Transverse colon (tissue), 4 donors: ENCODE measurements at regions of chr22 and their contacts with region 1.

Region 1: GRCh38 chr22:25536589-25536988 is 27.9 kb upstream of the GRK3 start:
- DNase-seq: no peak
- H3K4me3 ChIP-seq: no peak overlapping the region
- H3K27ac ChIP-seq: peak overlapping the region in 2 of 4 donors; percentile 3 to 30
- H3K4me1 ChIP-seq: peaks cover 0 to 4% (median 1%) of the 10 kb centered on the region in 4 donors
- H3K27me3 ChIP-seq: no peaks in the 10 kb centered on the region
- CTCF ChIP-seq: no peak
- EP300 ChIP-seq: no peak
- POLR2A ChIP-seq: no peak

Region 2: GRCh38 chr22:25485626-25486545 is 50.7 kb before region 1 on chr22:
- in situ Hi-C with region 1: no loop called
- intact Hi-C with region 1: loop called (anchors 2 kb)
- DNase-seq: no peak
- H3K4me3 ChIP-seq: no peak overlapping the region
- H3K27ac ChIP-seq: no peak overlapping the region
- H3K4me1 ChIP-seq: peaks cover 0 to 12% (median 6%) of the 10 kb centered on the region in 4 donors
- H3K27me3 ChIP-seq: no peaks in the 10 kb centered on the region
- CTCF ChIP-seq: no peak
- EP300 ChIP-seq: no peak
- POLR2A ChIP-seq: no peak

Region 3: DNA sequence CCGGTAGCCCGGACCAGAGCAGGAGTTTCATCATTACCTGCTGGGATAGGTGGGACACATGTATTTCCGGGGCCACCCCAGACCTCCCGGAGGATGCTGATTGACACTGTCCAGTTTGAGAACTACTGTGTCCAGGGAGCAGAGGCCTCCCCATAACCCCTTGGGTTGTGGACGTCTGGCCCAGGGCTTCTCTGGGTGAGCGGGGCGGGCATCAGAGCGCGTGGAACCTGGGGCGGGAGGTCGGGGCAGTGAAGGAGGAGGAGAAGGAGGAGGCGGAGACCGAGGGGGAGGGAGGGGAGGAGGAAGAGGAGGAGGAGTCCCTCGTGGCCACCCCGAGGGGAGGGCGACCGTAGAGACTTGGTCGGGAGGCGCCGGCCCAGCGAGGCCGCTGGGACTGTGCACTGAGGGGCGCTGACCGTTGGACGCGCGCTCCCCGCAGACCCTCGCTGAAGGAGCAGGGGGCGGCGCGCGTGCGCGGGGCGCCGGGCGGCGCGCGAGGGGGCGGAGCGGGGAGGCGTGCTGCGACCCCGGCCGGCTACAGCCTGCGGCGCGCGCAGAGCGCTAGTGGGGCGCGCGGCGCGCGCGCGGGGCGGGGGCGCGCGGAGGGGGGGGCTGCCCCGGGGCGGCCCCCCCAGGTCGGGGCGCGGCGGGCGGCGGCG is 27.9 kb after region 1 on chr22 and contains the start of gene GRK3:
- in situ Hi-C with region 1: no loop called
- intact Hi-C with region 1: loop called (anchors 2 kb)
- DNase-seq: peak; percentile 72
- H3K4me3 ChIP-seq: peak within 1 kb of the TSS; percentile 61 to 97 (median 81)
- H3K27ac ChIP-seq: peak within 1 kb of the TSS; percentile 68 to 87 (median 78)
- H3K4me1 ChIP-seq: peaks cover 4 to 23% (median 16%) of the 10 kb centered on the region in 4 donors
- H3K27me3 ChIP-seq: peaks cover 29% of the 10 kb centered on the region
- CTCF ChIP-seq: no peak
- EP300 ChIP-seq: no peak
- POLR2A ChIP-seq: peak; percentile 23
- total RNA-seq, gene GRK3: 1.6 to 7.9 (median 4.2) TPM